Sigmoid colon (tissue), 7 donors: ENCODE measurements at regions of chr4 and their contacts with region 1.

Region 1: GRCh38 chr4:184384056-184384809 is 90.1 kb downstream of the IRF2 start:
- DNase-seq: peak; percentile 79
- H3K4me3 ChIP-seq: peak overlapping the region; percentile 11 to 36 (median 30)
- H3K27ac ChIP-seq: peak overlapping the region; percentile 79 to 84 (median 80)
- H3K4me1 ChIP-seq: peaks cover 0 to 50% (median 47%) of the 10 kb centered on the region in 4 donors
- H3K27me3 ChIP-seq: no peaks in the 10 kb centered on the region
- CTCF ChIP-seq: no peak
- EP300 ChIP-seq: no peak
- POLR2A ChIP-seq: no peak

Region 2: GRCh38 chr4:184287697-184288255 is 96.5 kb before region 1 on chr4:
- intact Hi-C with region 1: loop called (anchors 5 kb)
- DNase-seq: no peak
- H3K4me3 ChIP-seq: no peak overlapping the region
- H3K27ac ChIP-seq: peak overlapping the region in 2 of 4 donors; percentile 7 to 8
- H3K4me1 ChIP-seq: peaks cover 0 to 10% (median 2%) of the 10 kb centered on the region in 4 donors
- H3K27me3 ChIP-seq: no peaks in the 10 kb centered on the region
- CTCF ChIP-seq: peak in 2 of 4 experiments; percentile 30
- EP300 ChIP-seq: no peak
- POLR2A ChIP-seq: no peak

Region 3: GRCh38 chr4:184343502-184344177 is 40.6 kb before region 1 on chr4:
- intact Hi-C with region 1: loop called (anchors 5 kb)
- DNase-seq: peak; percentile 88
- H3K4me3 ChIP-seq: peak overlapping the region; percentile 38 to 61 (median 56)
- H3K27ac ChIP-seq: peak overlapping the region; percentile 67 to 82 (median 76)
- H3K4me1 ChIP-seq: peaks cover 0 to 15% (median 4%) of the 10 kb centered on the region in 4 donors
- H3K27me3 ChIP-seq: no peaks in the 10 kb centered on the region
- CTCF ChIP-seq: no peak
- EP300 ChIP-seq: no peak
- POLR2A ChIP-seq: peak in 1 of 2 donors; percentile 44

Region 4: GRCh38 chr4:184506527-184507121 is 122.4 kb after region 1 on chr4:
- intact Hi-C with region 1: no loop called
- DNase-seq: no peak
- H3K4me3 ChIP-seq: no peak overlapping the region
- H3K27ac ChIP-seq: no peak overlapping the region
- H3K4me1 ChIP-seq: no peaks in the 10 kb centered on the region
- H3K27me3 ChIP-seq: no peaks in the 10 kb centered on the region
- CTCF ChIP-seq: no peak
- EP300 ChIP-seq: no peak
- POLR2A ChIP-seq: no peak